Naive thymus-derived CD4-positive, alpha-beta T cell (primary cell): ENCODE measurements at regions of chr14 and their contacts with region 1.

Region 1: DNA sequence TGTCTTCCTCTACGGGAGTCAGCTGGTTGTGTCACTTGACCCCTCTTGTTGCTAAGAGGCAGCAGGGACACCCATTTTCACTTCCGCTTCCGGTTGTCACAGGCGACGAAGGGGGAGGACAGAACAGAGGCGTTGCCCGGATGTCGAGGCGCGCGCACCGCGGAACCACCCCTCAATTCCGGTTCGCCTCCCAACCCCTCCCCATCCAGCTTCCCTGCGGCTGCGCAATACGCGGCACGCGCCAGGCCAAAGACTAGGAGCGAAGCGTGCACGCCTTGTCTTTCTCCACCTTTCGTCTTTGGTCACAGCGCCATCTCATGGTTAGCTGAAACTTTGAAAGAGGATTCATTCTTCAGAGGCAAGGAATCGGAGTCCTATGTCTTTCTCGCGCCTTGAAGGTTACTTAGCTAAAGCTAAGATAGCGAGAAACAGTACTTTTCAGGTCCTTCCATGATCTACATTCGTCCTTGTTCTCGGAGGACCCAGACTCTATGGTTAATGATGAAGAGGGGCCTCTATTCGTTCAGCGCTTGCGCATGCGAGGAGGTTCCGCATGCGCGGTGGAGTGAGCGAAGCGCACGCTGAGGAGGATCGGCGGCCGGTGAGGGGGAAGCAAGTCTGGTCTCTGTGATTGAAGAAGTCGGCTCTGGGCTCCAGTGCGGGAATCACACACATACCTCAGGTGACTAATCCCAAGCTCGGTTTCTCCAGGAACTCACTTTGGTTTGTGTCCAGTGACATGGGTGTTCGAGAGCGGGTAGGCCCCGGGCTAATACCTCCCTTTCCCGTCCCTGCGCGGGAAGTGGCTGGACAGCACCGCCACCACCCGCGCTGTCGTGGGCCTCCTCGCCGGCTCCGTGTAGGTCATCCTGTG is at the starts of genes ATP6V1D and EIF2S1:
- DNase-seq: peak; percentile 97 to 100 (median 100)
- ATAC-seq: peak; percentile 94
- H3K4me3 ChIP-seq: peak within 1 kb of the TSS; percentile 87
- H3K4me3 Mint-ChIP-seq: peak within 1 kb of the TSS; percentile 93 to 99 (median 98)
- H3K27ac ChIP-seq: peak within 1 kb of the TSS; percentile 82
- H3K27ac Mint-ChIP-seq: peak within 1 kb of the TSS; percentile 94 to 99 (median 96)
- H3K4me1 ChIP-seq: peaks cover 24 to 38% of the 10 kb centered on the region in 2 donors
- H3K4me1 Mint-ChIP-seq: peaks cover 43 to 94% (median 85%) of the 10 kb centered on the region in 7 donors
- H3K27me3 ChIP-seq: no peaks in the 10 kb centered on the region
- H3K27me3 Mint-ChIP-seq: peaks cover 0 to 5% (median 0%) of the 10 kb centered on the region in 5 donors
- total RNA-seq, gene ATP6V1D: 28.5 to 41.5 (median 33.4) TPM
- total RNA-seq, gene EIF2S1: 41.4 to 115 (median 49.4) TPM

Region 2: GRCh38 chr14:66507722-66508546 is 852.1 kb before region 1 on chr14 and contains the start of gene GPHN:
- CTCF ChIA-PET with region 1: no interaction called
- POLR2A ChIA-PET with region 1: no interaction called
- intact Hi-C with region 1: loop called (anchors 1 kb)
- DNase-seq: peak; percentile 62 to 87 (median 82)
- ATAC-seq: peak; percentile 93
- H3K4me3 ChIP-seq: peak within 1 kb of the TSS; percentile 78
- H3K4me3 Mint-ChIP-seq: peak within 1 kb of the TSS; percentile 94 to 100 (median 99)
- H3K27ac ChIP-seq: peak within 1 kb of the TSS; percentile 70
- H3K27ac Mint-ChIP-seq: peak within 1 kb of the TSS; percentile 71 to 96 (median 91)
- H3K4me1 ChIP-seq: peaks cover 6 to 7% of the 10 kb centered on the region in 2 donors
- H3K4me1 Mint-ChIP-seq: peaks cover 16 to 42% (median 34%) of the 10 kb centered on the region in 7 donors
- H3K27me3 ChIP-seq: no peaks in the 10 kb centered on the region
- H3K27me3 Mint-ChIP-seq: peaks cover 0 to 29% (median 0%) of the 10 kb centered on the region in 5 donors
- total RNA-seq, gene GPHN: 11.8 to 28.1 (median 14.8) TPM

Region 3: GRCh38 chr14:67166450-67166853 is 193.6 kb before region 1 on chr14:
- CTCF ChIA-PET with region 1: no interaction called
- POLR2A ChIA-PET with region 1: no interaction called
- intact Hi-C with region 1: loop called in 1 of 2 experiments (anchors 1 kb)
- DNase-seq: peak in 6 of 9 donors; percentile 26 to 39 (median 38)
- ATAC-seq: no peak
- H3K4me3 ChIP-seq: no peak overlapping the region
- H3K4me3 Mint-ChIP-seq: no peak overlapping the region
- H3K27ac ChIP-seq: no peak overlapping the region
- H3K27ac Mint-ChIP-seq: no peak overlapping the region
- H3K4me1 ChIP-seq: no peaks in the 10 kb centered on the region
- H3K4me1 Mint-ChIP-seq: peaks cover 0 to 8% (median 0%) of the 10 kb centered on the region in 7 donors
- H3K27me3 ChIP-seq: no peaks in the 10 kb centered on the region
- H3K27me3 Mint-ChIP-seq: no peaks in the 10 kb centered on the region

Region 4: DNA sequence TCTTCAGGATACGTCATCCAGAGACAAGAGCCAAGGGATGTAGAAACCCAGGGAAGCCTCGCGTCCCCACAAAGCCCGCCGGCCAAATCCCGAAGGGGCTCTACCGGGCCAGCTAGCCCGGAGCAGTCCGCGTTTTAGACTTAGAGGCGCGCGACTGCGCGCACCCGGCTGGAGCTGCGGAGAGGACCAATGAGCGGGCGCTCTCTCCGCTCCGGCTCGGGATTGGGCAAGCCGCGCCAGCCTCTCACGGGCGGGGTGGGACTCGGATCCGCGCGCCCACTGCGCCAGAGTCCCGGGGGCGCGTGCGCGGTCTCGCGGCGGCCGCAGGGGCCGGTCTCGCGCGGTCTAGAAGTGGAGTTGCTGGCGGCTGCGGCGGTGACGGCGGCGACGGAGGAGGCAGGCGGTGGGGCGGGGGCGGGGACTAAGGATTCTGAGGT is 119.0 kb before region 1 on chr14:
- CTCF ChIA-PET with region 1: no interaction called
- POLR2A ChIA-PET with region 1: interaction called, 3 read pairs
- intact Hi-C with region 1: loop called (anchors 1 kb)
- DNase-seq: peak; percentile 87 to 93 (median 91)
- ATAC-seq: peak; percentile 97
- H3K4me3 ChIP-seq: peak overlapping the region; percentile 84
- H3K4me3 Mint-ChIP-seq: peak overlapping the region; percentile 81 to 95 (median 91)
- H3K27ac ChIP-seq: peak overlapping the region; percentile 74
- H3K27ac Mint-ChIP-seq: peak overlapping the region; percentile 8 to 92 (median 85)
- H3K4me1 ChIP-seq: peaks cover 6 to 10% of the 10 kb centered on the region in 2 donors
- H3K4me1 Mint-ChIP-seq: peaks cover 16 to 37% (median 28%) of the 10 kb centered on the region in 7 donors
- H3K27me3 ChIP-seq: no peaks in the 10 kb centered on the region
- H3K27me3 Mint-ChIP-seq: peaks cover 0 to 33% (median 0%) of the 10 kb centered on the region in 5 donors

Region 5: DNA sequence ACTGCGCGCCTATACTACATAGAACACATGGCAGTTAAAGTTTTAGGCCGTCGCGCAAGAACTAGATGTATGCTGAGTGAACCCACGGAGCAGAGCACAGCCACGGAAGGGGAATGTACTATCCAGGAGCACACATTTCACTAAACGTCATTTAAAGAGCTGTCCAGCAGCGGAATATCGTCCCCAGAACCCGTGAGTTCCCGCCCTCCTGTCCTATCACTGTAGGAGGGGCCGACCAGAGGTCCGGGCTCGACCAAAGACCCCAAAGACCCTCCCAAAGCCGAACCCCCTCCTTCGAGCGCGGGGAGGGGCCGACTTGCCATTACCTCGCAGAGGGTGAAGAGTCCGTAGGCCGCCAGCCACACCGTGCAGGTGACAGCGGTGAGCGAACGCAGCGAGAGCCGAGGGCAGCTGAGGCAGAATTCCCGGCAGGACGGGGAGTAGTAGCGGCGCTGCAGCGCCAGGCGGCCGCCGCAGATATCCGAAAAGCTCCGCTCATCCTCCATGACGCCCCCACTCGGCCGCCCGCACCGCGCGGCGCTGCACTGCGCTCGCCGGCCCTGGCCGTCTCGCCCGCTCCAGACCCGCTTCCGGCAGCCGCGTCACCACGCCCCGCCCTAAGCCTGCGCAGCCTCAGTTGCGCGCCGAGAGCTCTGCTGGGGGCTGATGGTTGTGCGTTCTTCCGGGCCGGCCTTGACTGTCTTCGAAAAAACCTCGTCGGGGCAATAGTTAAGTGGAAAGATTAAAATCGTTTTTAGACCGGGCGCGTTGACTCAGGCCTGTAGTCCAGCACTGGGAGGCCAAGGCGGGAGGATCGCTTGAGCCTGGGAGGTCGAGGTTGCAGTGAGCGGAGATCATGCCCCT is 239.9 kb after region 1 on chr14 and contains the start of gene PIGH:
- CTCF ChIA-PET with region 1: no interaction called
- POLR2A ChIA-PET with region 1: interaction called, 7 read pairs
- intact Hi-C with region 1: loop called (anchors 1 kb)
- DNase-seq: peak; percentile 89 to 96 (median 94)
- ATAC-seq: peak; percentile 98
- H3K4me3 ChIP-seq: peak within 1 kb of the TSS; percentile 70
- H3K4me3 Mint-ChIP-seq: peak within 1 kb of the TSS; percentile 87 to 100 (median 98)
- H3K27ac ChIP-seq: peak within 1 kb of the TSS; percentile 86
- H3K27ac Mint-ChIP-seq: peak within 1 kb of the TSS; percentile 87 to 99 (median 97)
- H3K4me1 ChIP-seq: peaks cover 16 to 22% of the 10 kb centered on the region in 2 donors
- H3K4me1 Mint-ChIP-seq: peaks cover 26 to 57% (median 46%) of the 10 kb centered on the region in 7 donors
- H3K27me3 ChIP-seq: no peaks in the 10 kb centered on the region
- H3K27me3 Mint-ChIP-seq: peaks cover 0 to 10% (median 0%) of the 10 kb centered on the region in 5 donors
- total RNA-seq, gene PIGH: 14.3 to 42.1 (median 34.5) TPM

Region 6: DNA sequence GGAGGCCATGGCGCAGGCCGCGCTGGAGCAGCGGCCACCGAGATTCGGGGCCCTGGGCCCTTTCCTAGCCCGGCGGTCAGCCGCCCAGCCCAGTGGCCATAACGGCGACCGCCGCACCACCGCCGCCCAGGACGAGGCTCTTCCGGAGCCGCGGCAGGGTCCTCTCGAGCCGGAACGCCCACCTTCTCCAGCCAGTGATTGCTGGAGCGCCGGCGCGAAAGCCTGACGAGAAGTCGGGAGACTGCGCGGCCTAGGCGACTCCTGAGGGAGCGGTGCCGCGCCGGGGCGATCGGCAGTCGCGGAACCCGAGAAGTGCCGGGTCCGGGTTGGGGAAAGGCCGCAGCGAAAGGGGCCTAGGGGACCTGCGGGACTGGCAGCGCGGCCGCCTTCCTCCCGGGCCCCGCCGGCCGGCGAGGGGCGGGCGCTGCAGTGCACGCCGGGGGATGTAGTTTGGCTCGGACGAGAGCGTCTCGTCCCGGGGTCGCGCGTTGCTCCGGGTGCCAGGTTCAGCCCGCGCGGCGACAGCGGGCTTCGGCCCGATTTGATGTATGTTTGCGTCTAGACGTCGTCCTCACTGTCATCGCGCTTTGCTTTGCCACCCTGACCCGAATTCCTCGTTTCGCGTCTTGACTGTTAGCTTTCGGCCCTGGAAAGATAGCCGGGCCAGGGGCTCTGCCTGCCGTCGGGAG is 314.6 kb after region 1 on chr14 and contains the start of gene VTI1B:
- CTCF ChIA-PET with region 1: no interaction called
- POLR2A ChIA-PET with region 1: no interaction called
- intact Hi-C with region 1: loop called (anchors 1 kb)
- DNase-seq: peak; percentile 71 to 84 (median 80)
- ATAC-seq: peak; percentile 95
- H3K4me3 ChIP-seq: peak within 1 kb of the TSS; percentile 65
- H3K4me3 Mint-ChIP-seq: peak within 1 kb of the TSS; percentile 91 to 96 (median 93)
- H3K27ac ChIP-seq: peak within 1 kb of the TSS; percentile 95
- H3K27ac Mint-ChIP-seq: peak within 1 kb of the TSS; percentile 82 to 96 (median 92)
- H3K4me1 ChIP-seq: peaks cover 17 to 21% of the 10 kb centered on the region in 2 donors
- H3K4me1 Mint-ChIP-seq: peaks cover 22 to 62% (median 55%) of the 10 kb centered on the region in 7 donors
- H3K27me3 ChIP-seq: no peaks in the 10 kb centered on the region
- H3K27me3 Mint-ChIP-seq: no peaks in the 10 kb centered on the region
- total RNA-seq, gene VTI1B: 49.2 to 82.4 (median 65.9) TPM